ENCODE measurements at regions of chr19 and their contacts with region 1.

Region 1: DNA sequence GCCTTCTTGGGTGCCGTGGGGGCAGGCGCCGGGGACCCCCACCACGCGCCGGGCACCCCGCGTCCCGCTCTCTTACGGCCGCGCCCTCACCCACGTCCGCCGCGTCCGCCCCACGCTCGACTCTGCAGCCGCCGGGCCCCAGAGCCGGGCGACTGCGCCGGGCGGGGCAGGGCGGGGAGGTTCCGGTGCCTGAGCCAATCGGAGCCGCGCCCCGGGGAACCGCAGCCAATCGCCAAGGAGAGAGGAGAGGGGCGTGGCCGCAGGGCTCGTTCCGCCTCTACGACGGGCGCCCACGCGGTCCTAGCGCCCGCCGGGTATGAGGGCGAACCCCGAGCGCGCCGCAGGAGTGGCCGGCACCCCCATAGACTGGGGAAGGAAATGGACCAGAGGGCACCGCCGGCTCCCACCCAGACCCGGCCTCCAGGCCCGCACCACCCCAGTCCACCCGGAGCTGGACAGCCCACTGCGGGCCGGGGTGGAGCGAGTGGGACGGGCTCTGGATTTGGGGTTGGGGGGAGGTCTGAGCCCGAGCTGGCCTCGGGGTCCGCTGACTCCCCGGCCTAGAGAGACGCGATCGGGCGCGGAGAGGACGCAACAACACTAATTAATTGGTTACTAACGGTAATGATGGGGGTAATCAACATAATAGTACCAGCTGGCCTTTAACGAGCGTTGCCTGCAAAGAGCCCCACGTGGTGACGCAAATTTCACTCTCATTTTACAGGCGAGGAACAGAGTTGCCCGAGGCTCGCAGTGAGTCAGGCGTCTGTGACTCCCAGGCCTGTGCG is at the start of gene MFSD12:
- DNase-seq: peak; percentile 94
- H3K4me3 ChIP-seq: peak within 1 kb of the TSS; percentile 76 to 85
- H3K27ac ChIP-seq: no peak within 1 kb of the TSS
- H3K4me1 ChIP-seq: peaks cover 16% of the 10 kb centered on the region
- H3K27me3 ChIP-seq: no peaks in the 10 kb centered on the region
- CTCF ChIP-seq: peak in 1 of 3 experiments; percentile 23
- POLR2A ChIP-seq: peak; percentile 41
- total RNA-seq, gene MFSD12: 83.9 to 95.1 TPM

Region 2: GRCh38 chr19:3618144-3618810 is 60.6 kb after region 1 on chr19:
- intact Hi-C with region 1: loop called (anchors 10 kb)
- DNase-seq: peak; percentile 66
- H3K4me3 ChIP-seq: no peak overlapping the region
- H3K27ac ChIP-seq: no peak overlapping the region
- H3K4me1 ChIP-seq: no peaks in the 10 kb centered on the region
- H3K27me3 ChIP-seq: no peaks in the 10 kb centered on the region
- CTCF ChIP-seq: peak; percentile 86 to 92 (median 89)
- POLR2A ChIP-seq: no peak

Region 3: GRCh38 chr19:3632739-3633558 is 75.3 kb after region 1 on chr19:
- intact Hi-C with region 1: no loop called
- DNase-seq: peak; percentile 70
- H3K4me3 ChIP-seq: no peak overlapping the region
- H3K27ac ChIP-seq: peak overlapping the region; percentile 71 to 76
- H3K4me1 ChIP-seq: no peaks in the 10 kb centered on the region
- H3K27me3 ChIP-seq: no peaks in the 10 kb centered on the region
- CTCF ChIP-seq: no peak
- POLR2A ChIP-seq: no peak

Measured in testis (tissue), 5 donors.